Activated T-helper 1 cell treated with anti-CD3 and anti-CD28 coated beads, Interleukin-12 subunit alpha, Interleukin-12 subunit beta, Interleukin-2, Interleukin-4 antibody, amounts not matched to agents 30 ng/mL and 10 ng/mL and 1 ng/mL, durations not matched to agents 14 hours and 24 hours and 36 hours (primary cell): ENCODE measurements at regions of chr6 and their contacts with region 1.

Region 1: GRCh38 chr6:142566628-142567396 is 265.0 kb downstream of the ADGRG6 start:
- DNase-seq: peak; percentile 38
- H3K4me3 Mint-ChIP-seq: no peak overlapping the region
- H3K27ac Mint-ChIP-seq: no peak overlapping the region
- H3K4me1 Mint-ChIP-seq: peaks cover 48% of the 10 kb centered on the region
- H3K27me3 Mint-ChIP-seq: no peaks in the 10 kb centered on the region

Region 2: DNA sequence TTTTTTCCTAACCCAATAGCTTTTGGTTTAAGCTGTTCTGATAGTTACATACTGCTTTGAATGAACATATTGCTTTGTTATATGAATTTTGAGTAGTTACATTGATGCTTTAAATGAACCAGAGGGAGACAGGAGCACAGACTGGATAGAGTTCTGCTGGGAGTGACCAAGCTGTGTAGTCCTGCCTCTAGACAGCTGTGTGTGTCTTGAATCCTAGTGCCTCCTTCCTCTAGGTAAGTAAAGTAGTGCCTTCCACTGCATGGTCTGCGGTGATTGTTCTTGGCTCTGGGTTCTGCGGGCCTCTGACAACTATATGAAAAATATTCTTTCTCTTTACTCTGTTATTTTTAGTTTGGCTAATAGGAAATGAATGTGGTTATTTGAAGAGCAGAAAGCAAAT is 311.0 kb before region 1 on chr6:
- intact Hi-C with region 1: no loop called
- DNase-seq: no peak
- H3K4me3 Mint-ChIP-seq: no peak overlapping the region
- H3K27ac Mint-ChIP-seq: no peak overlapping the region
- H3K4me1 Mint-ChIP-seq: no peaks in the 10 kb centered on the region
- H3K27me3 Mint-ChIP-seq: peaks cover 3% of the 10 kb centered on the region

Region 3: DNA sequence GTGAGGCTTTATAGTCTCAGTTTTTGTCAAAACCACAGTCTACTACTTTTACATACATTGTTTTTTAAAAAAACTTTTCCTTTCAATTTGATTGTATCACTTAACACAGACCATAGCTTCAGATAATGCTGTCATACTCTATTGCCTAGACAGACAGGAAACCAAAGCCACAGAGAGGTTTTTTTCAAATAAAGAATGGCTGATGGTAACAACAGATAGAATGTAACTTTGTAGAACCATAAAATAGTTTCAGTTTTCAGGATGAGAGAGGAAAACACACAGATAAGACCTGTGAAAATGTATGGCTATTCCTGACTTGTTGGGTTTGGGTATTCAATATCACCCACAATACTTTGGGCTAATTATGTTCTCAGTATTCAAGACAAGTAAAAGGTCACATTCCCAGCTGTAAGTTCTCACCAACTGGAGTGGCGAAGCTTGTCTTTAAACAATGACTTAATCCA is 171.0 kb before region 1 on chr6:
- intact Hi-C with region 1: loop called (anchors 1 kb)
- DNase-seq: peak; percentile 12
- H3K4me3 Mint-ChIP-seq: no peak overlapping the region
- H3K27ac Mint-ChIP-seq: peak overlapping the region; percentile 10
- H3K4me1 Mint-ChIP-seq: peaks cover 15% of the 10 kb centered on the region
- H3K27me3 Mint-ChIP-seq: peaks cover 56% of the 10 kb centered on the region

Region 4: DNA sequence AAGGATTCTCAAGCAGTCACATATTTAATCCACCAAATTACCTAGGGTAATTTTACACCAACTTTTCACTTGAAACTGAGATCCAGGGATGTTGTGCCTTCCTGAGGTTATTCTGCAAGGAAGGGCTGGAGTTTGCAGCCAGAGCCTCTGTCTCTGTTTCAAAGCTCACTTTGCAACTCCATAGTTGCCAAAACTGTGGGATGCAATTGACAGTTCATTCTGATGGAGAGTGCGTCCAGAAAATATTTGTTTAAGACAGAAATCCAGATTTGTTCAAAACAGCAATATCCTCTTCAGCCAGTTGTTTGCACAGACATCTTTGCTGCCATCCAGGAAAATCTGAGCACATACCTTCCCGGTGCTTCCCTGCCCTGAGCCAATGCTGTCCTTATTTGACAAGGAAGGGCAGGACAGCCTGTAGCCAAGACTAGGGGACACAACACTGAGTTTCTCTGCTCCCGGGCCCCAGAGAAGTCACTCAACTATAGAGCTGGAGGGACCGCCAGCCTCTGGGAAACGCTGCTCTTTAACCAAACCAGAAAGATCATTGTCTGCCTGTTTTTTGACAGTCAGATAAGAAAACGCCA is 80.7 kb after region 1 on chr6:
- intact Hi-C with region 1: no loop called
- DNase-seq: no peak
- H3K4me3 Mint-ChIP-seq: no peak overlapping the region
- H3K27ac Mint-ChIP-seq: no peak overlapping the region
- H3K4me1 Mint-ChIP-seq: no peaks in the 10 kb centered on the region
- H3K27me3 Mint-ChIP-seq: peaks cover 3% of the 10 kb centered on the region

Region 5: GRCh38 chr6:142671791-142672190 is 105.0 kb after region 1 on chr6:
- intact Hi-C with region 1: no loop called
- DNase-seq: no peak
- H3K4me3 Mint-ChIP-seq: no peak overlapping the region
- H3K27ac Mint-ChIP-seq: no peak overlapping the region
- H3K4me1 Mint-ChIP-seq: peaks cover 7% of the 10 kb centered on the region
- H3K27me3 Mint-ChIP-seq: no peaks in the 10 kb centered on the region

Region 6: GRCh38 chr6:143026696-143027449 is 460.1 kb after region 1 on chr6:
- intact Hi-C with region 1: loop called (anchors 1 kb)
- DNase-seq: peak; percentile 9
- H3K4me3 Mint-ChIP-seq: no peak overlapping the region
- H3K27ac Mint-ChIP-seq: no peak overlapping the region
- H3K4me1 Mint-ChIP-seq: peaks cover 11% of the 10 kb centered on the region
- H3K27me3 Mint-ChIP-seq: no peaks in the 10 kb centered on the region

Region 7: DNA sequence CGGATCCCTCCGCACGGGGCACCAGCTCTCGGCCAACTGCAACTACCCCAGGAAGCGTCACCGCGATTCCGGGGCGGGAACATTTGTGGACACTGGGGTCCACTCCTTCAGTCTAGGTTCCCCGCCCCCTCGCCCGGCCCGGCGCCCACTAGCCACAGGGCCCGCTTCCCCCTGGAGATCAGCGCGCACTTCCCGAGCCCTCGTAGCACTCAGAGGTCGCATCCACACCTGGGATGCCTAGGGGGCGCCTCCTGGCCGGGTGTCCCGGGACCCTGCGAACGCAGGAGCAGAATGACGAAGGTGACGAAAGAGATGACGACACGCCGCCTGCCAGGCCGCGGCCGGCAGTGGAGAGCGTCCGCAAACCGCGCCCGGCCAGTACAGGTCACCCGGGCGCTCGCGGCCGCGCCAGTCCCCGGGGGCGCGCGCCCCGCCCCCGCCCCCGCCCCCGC is 493.6 kb after region 1 on chr6:
- intact Hi-C with region 1: loop called (anchors 10 kb)
- DNase-seq: peak; percentile 72
- H3K4me3 Mint-ChIP-seq: peak overlapping the region; percentile 90
- H3K27ac Mint-ChIP-seq: peak overlapping the region; percentile 94
- H3K4me1 Mint-ChIP-seq: peaks cover 28% of the 10 kb centered on the region
- H3K27me3 Mint-ChIP-seq: no peaks in the 10 kb centered on the region

Region 8: GRCh38 chr6:143337201-143337949 is 770.6 kb after region 1 on chr6:
- intact Hi-C with region 1: loop called (anchors 5 kb)
- DNase-seq: peak; percentile 14
- H3K4me3 Mint-ChIP-seq: no peak overlapping the region
- H3K27ac Mint-ChIP-seq: no peak overlapping the region
- H3K4me1 Mint-ChIP-seq: peaks cover 4% of the 10 kb centered on the region
- H3K27me3 Mint-ChIP-seq: no peaks in the 10 kb centered on the region

Region 9: DNA sequence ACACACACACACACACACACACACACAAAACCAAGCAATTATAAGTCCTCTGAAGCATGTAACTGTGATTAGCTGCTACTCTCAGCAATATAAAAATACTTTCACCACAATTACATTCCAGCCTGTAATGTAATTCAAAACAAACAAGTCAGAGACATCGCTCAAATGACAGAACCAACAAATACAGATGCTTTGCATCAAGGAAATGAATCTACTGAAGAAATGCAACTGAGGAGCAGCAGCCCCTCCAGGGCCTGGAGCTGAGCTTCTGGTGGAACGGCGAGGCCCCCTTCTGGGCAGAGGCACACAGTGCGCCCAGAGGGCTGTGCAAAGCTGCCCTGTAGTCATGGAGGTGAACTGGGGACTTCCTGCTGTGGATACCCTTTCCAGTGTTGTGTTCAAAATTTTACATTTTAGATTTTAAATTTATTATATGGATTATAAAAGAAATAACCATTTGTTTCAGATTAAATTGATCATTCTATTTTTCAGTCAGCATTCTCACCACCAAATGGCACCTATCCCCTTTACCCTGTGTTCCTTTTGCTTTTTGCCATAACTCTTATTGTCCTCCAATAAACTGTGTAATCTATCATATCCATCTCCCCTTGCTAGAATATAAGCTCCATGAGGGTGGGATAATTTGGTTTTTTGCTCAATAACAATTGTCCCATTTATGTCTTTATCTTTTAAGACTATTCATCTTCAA is 860.5 kb after region 1 on chr6:
- intact Hi-C with region 1: loop called (anchors 1 kb)
- DNase-seq: peak; percentile 55
- H3K4me3 Mint-ChIP-seq: no peak overlapping the region
- H3K27ac Mint-ChIP-seq: no peak overlapping the region
- H3K4me1 Mint-ChIP-seq: no peaks in the 10 kb centered on the region
- H3K27me3 Mint-ChIP-seq: no peaks in the 10 kb centered on the region

Region 10: DNA sequence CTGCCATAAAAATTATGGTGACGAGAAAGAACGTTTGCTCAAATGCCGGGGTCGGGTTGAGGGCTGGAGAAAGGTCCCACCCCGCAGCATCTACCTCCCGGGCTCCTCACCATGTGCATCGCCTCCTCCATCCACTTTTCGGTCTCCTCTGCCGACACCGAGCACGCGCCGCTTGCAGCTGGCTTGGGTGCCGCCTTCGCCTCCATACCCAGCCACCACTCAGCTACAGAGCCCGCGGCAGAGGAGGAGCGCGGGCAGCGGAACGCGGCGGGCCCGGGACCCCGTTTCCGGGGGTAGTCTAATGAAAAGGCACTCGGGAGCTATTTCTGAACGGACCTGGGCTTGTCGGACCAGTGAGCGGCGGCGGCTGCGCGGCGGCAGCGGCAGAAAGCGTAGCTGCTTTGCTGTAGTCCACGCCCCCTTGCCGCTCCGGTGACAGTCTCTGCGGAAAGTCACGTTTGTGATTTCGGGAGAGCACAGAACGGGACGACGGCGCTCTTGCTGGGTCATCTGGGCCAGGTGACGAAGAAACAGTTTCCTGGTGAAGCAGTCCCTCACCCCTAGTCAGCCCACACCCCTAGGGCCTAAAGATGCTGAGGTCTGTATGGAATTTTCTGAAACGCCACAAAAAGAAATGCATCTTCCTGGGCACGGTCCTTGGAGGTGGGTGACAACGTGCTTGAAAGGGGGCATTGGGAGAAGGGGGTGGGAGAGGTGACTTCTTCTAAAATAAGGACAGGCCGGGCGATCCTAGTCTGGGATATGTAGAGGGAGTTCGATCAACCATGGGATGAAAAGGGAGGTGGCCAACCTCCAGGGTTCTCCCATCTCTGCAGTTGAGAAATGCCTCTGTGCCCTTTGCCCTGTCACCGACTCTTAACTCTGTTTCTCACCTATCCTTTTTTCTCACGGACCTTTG is 883.9 kb after region 1 on chr6 and contains the starts of genes ADAT2 and PEX3:
- intact Hi-C with region 1: loop called (anchors 5 kb)
- DNase-seq: peak; percentile 92
- H3K4me3 Mint-ChIP-seq: peak within 1 kb of the TSS; percentile 98
- H3K27ac Mint-ChIP-seq: peak within 1 kb of the TSS; percentile 99
- H3K4me1 Mint-ChIP-seq: peaks cover 50% of the 10 kb centered on the region
- H3K27me3 Mint-ChIP-seq: no peaks in the 10 kb centered on the region
- total RNA-seq, gene ADAT2: 39.0 and 43.6 TPM in 2 replicates
- total RNA-seq, gene PEX3: 23.6 and 25.0 TPM in 2 replicates